ENCODE measurements at regions of chr18 and their contacts with region 1.

Region 1: GRCh38 chr18:49858309-49859020 is 45.1 kb upstream of the ACAA2 start:
- DNase-seq: no peak
- ATAC-seq: peak; percentile 70
- H3K4me3 ChIP-seq: no peak overlapping the region
- H3K27ac ChIP-seq: no peak overlapping the region
- H3K4me1 ChIP-seq: no peaks in the 10 kb centered on the region
- H3K27me3 ChIP-seq: no peaks in the 10 kb centered on the region; a peak in 1 of 4 replicates
- CTCF ChIP-seq: peak; percentile 80 to 90 (median 84)
- EP300 ChIP-seq: no peak
- POLR2A ChIP-seq: no peak
- RAD21 ChIP-seq: peak; percentile 99

Region 2: DNA sequence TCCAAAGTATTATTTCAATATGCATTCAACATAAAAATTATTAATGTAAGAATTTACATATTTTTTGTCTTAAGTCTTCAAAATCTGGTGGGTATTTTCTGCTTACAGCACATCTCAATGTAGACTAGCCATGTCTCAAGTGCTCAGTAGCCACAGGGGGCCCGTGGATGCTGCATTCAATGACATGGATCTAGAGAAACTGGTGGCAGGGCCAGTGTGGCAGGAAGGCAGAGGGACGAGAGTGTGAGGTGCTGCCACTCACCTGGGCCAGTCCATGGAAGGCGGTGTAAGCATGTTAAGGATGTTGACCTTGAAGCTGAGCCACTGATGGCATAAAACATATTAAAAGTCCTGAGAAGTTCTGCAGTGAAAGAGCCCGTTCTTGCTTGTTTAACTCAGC is 302.8 kb before region 1 on chr18:
- CTCF ChIA-PET with region 1: interaction called, 12 read pairs
- POLR2A ChIA-PET with region 1: no interaction called
- RAD21 ChIA-PET with region 1: interaction called, 6 read pairs
- SMC1A ChIA-PET with region 1: interaction called, 10 read pairs
- in situ Hi-C with region 1: loop called (anchors 5 kb)
- intact Hi-C with region 1: loop called (anchors 1 kb)
- DNase-seq: no peak
- ATAC-seq: no peak
- H3K4me3 ChIP-seq: no peak overlapping the region
- H3K27ac ChIP-seq: no peak overlapping the region
- H3K4me1 ChIP-seq: no peaks in the 10 kb centered on the region
- H3K27me3 ChIP-seq: peaks cover 1 to 3% of the 10 kb centered on the region in 2 experiments; a peak in 3 of 4 replicates
- CTCF ChIP-seq: no peak
- EP300 ChIP-seq: no peak
- POLR2A ChIP-seq: no peak
- RAD21 ChIP-seq: no peak

Region 3: GRCh38 chr18:49728542-49728941 is 129.9 kb before region 1 on chr18:
- CTCF ChIA-PET with region 1: interaction called, 8 read pairs
- POLR2A ChIA-PET with region 1: no interaction called
- RAD21 ChIA-PET with region 1: interaction called, 4 read pairs
- SMC1A ChIA-PET with region 1: interaction called, 3 read pairs
- in situ Hi-C with region 1: no loop called
- intact Hi-C with region 1: loop called (anchors 2 kb)
- DNase-seq: no peak
- ATAC-seq: peak; percentile 77
- H3K4me3 ChIP-seq: no peak overlapping the region
- H3K27ac ChIP-seq: no peak overlapping the region
- H3K4me1 ChIP-seq: peaks cover 5% of the 10 kb centered on the region
- H3K27me3 ChIP-seq: peaks cover 0 to 3% of the 10 kb centered on the region in 2 experiments; a peak in 1 of 4 replicates
- CTCF ChIP-seq: peak; percentile 67 to 80 (median 69)
- EP300 ChIP-seq: no peak
- POLR2A ChIP-seq: no peak
- RAD21 ChIP-seq: peak; percentile 59

Region 4: GRCh38 chr18:49812286-49813068 is 46.0 kb before region 1 on chr18:
- CTCF ChIA-PET with region 1: interaction called, 11 read pairs
- POLR2A ChIA-PET with region 1: no interaction called
- RAD21 ChIA-PET with region 1: interaction called, 5 read pairs
- SMC1A ChIA-PET with region 1: interaction called, 3 read pairs
- in situ Hi-C with region 1: no loop called
- intact Hi-C with region 1: no loop called
- DNase-seq: no peak
- ATAC-seq: no peak
- H3K4me3 ChIP-seq: peak overlapping the region; percentile 95
- H3K27ac ChIP-seq: peak overlapping the region; percentile 94
- H3K4me1 ChIP-seq: no peaks in the 10 kb centered on the region
- H3K27me3 ChIP-seq: no peaks in the 10 kb centered on the region
- CTCF ChIP-seq: no peak
- EP300 ChIP-seq: no peak
- POLR2A ChIP-seq: no peak
- RAD21 ChIP-seq: no peak

Measured in GM12878 (cell line).